Panc1 (cell line): ENCODE measurements at regions of chr2 and their contacts with region 1.

Region 1: DNA sequence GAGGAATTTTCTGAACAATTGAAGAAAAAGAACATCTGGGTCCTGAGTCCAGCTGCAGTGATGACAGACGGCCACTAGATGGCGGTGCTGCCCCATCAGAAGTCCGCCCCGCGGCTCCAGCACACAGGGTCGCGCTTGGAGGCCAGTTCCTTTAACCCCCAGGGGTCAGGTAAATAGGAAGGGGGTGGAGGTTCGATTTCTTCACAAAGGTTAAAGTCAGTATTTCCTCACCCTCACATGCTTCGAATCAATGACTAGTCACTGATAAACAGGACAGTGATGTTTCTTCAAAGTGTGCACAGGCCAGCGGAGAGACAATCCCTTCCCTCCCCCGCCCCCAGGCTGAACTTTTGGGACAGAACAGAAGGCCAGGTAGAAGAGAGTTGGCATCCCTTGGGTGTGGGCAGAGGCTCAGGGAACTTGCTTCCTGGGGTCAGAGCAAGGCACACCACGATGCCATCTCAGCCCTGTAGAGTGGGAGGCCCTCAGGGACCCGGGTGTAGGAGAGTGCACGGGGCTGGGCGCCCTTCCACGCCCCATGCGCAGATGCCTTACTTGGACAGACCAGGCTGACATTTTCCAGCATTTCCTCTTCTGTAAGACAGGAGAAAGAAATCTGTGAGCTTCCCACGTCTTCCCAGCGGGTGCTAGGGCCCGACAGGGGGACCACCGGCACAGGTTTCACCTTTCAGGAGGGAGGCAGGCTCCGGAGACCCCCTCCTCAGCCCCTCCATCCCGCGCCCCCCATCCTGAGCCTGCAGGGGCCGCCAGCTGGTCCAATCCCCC is 722 bp downstream of the APOB start:
- DNase-seq: peak; percentile 18
- ATAC-seq: peak; percentile 78
- H3K4me3 ChIP-seq: no peak overlapping the region
- H3K27ac ChIP-seq: no peak overlapping the region
- H3K4me1 ChIP-seq: no peaks in the 10 kb centered on the region
- H3K27me3 ChIP-seq: peaks cover 5% of the 10 kb centered on the region
- CTCF ChIP-seq: peak; percentile 97

Region 2: DNA sequence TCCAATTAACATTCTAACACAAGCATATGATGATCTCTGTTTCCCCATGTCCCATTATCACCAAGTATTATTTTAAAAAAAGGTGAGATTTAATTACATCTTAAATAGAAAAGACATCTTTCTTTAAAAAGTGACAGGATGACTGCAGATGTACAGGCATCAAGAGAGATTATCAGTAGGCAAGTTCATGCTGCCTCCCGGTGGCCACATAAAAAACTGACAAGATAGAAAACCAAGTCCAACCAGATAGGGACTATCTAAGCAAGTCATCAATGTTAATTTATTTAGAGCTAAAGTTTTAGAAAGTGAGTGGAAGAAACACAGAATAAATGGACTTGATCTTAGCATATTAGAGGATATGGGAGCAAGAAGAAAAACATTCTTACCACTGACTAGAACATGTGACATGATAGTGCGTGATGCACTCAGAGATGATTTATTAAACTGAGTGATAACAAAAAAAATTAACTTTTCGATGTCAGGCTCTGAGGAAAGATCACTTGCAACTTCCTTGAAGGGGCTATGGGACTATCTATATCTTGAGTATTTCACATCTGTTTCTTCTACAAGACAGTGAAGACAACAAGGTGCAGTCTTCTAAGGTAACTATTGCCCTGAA is 75.3 kb after region 1 on chr2:
- CTCF ChIA-PET with region 1: no interaction called
- POLR2A ChIA-PET with region 1: no interaction called
- in situ Hi-C with region 1: no loop called
- intact Hi-C with region 1: loop called (anchors 1 kb)
- DNase-seq: peak; percentile 7
- ATAC-seq: peak; percentile 83; the same call in 1 of the 2 replicates
- H3K4me3 ChIP-seq: no peak overlapping the region
- H3K27ac ChIP-seq: no peak overlapping the region
- H3K4me1 ChIP-seq: no peaks in the 10 kb centered on the region
- H3K27me3 ChIP-seq: no peaks in the 10 kb centered on the region
- CTCF ChIP-seq: peak; percentile 54; the same call in 1 of the 2 replicates